ENCODE measurements at regions of chr4 and their contacts with region 1.

Region 1: DNA sequence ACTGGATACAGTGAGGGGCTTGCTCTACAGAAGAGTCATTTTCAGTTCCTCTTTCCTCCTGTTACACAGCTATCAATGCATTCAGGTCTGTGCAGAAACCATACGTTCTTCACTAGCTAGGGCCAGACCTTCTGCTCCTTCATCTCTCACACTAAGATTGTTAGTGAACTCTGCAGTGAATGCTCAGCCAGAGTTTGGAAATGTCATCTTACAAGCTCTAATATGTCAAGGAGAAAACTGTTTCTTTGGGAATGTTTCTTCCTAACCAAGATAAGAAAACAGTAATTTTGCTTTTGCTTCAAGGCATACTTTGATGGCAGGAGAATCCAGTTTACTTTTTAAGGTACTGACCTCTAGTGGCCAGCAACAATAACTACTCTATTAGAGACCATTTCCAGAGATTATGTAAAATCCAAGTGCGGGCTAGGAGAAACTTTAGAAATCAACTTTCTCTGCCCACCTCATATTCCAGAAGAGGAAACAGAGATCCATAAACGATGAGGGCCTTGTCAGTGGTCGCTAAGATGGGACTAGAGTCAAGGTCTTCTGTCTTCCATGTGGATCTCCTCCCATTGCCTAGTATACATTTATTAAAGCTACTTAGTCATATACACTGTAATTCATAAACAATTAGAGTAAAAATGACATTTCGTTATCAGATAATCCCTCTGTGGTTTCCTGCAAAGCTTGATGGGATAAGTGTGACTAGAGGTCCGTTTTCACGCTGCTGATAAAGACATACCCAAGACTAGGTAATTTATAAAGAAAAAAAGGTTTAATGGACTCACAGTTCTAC is 12.1 kb upstream of the CC2D2A start:
- DNase-seq: no peak
- ATAC-seq: peak; percentile 69
- H3K4me3 Mint-ChIP-seq: no peak overlapping the region
- H3K27ac Mint-ChIP-seq: no peak overlapping the region
- H3K4me1 Mint-ChIP-seq: peaks cover 3% of the 10 kb centered on the region
- H3K27me3 Mint-ChIP-seq: no peaks in the 10 kb centered on the region

Region 2: DNA sequence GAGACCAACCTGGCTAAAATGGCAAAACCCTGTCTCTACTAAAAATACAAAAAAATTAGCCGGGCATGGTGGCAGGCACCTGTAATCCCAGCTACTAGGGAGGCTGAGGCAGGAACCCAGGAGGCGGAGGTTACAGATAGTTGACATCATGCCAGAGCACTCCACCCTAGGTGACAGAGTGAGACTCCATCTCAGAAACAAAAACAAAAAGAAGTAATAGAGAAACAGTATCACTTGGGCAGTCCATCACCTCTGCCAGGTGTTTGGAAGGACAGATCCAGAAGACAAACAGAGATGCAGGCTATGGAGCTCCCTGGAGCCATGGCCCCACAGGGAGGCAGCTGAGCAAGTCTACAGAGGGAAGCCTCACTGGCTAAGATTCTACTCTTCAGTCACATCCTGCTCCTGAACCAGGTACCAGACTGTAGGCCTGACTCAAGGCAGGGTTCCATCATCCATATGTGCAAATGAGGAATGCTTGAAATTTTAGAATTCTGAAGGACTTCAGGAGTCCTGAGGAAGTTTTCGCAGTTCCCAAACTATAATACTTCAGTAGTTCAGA is 536.8 kb before region 1 on chr4:
- CTCF ChIA-PET with region 1: no interaction called
- POLR2A ChIA-PET with region 1: no interaction called
- intact Hi-C with region 1: loop called in 1 of 2 experiments (anchors 10 kb)
- DNase-seq: peak; percentile 55
- ATAC-seq: peak; percentile 76
- H3K4me3 Mint-ChIP-seq: no peak overlapping the region
- H3K27ac Mint-ChIP-seq: no peak overlapping the region
- H3K4me1 Mint-ChIP-seq: no peaks in the 10 kb centered on the region
- H3K27me3 Mint-ChIP-seq: peaks cover 6% of the 10 kb centered on the region

Region 3: DNA sequence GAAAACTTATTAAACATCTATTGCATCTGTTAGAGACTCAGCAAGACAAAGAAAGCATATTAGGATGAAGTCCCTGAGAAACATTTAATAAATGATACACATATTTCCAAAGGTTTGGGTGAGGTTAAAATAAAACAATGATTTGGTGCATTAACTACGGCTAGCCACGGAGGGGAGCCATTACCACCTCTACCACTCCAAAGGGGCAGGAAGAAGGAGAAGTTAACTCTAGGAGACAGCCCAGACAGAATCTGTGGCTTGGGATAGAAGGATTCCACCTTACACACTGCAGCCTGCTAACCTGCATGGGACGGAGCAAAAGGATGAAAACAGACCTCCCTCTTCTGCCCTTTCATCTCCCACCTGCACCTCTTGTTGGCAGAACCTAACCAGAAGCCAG is 218.9 kb before region 1 on chr4:
- CTCF ChIA-PET with region 1: interaction called, 27 read pairs
- POLR2A ChIA-PET with region 1: interaction called, 12 read pairs
- intact Hi-C with region 1: loop called (anchors 1 kb)
- DNase-seq: peak; percentile 58
- ATAC-seq: peak; percentile 55
- H3K4me3 Mint-ChIP-seq: no peak overlapping the region
- H3K27ac Mint-ChIP-seq: no peak overlapping the region
- H3K4me1 Mint-ChIP-seq: peaks cover 11% of the 10 kb centered on the region
- H3K27me3 Mint-ChIP-seq: no peaks in the 10 kb centered on the region

Region 4: GRCh38 chr4:15444872-15445547 is 12.6 kb before region 1 on chr4:
- CTCF ChIA-PET with region 1: interaction called, 32 read pairs
- POLR2A ChIA-PET with region 1: no interaction called
- intact Hi-C with region 1: no loop called
- DNase-seq: no peak
- ATAC-seq: no peak
- H3K4me3 Mint-ChIP-seq: no peak overlapping the region
- H3K27ac Mint-ChIP-seq: no peak overlapping the region
- H3K4me1 Mint-ChIP-seq: peaks cover 11% of the 10 kb centered on the region
- H3K27me3 Mint-ChIP-seq: no peaks in the 10 kb centered on the region

Region 5: GRCh38 chr4:15479089-15479912 is 21.7 kb after region 1 on chr4:
- CTCF ChIA-PET with region 1: interaction called, 11 read pairs
- POLR2A ChIA-PET with region 1: no interaction called
- intact Hi-C with region 1: no loop called
- DNase-seq: peak; percentile 15
- ATAC-seq: peak; percentile 39
- H3K4me3 Mint-ChIP-seq: no peak overlapping the region
- H3K27ac Mint-ChIP-seq: no peak overlapping the region
- H3K4me1 Mint-ChIP-seq: no peaks in the 10 kb centered on the region
- H3K27me3 Mint-ChIP-seq: no peaks in the 10 kb centered on the region

Region 6: DNA sequence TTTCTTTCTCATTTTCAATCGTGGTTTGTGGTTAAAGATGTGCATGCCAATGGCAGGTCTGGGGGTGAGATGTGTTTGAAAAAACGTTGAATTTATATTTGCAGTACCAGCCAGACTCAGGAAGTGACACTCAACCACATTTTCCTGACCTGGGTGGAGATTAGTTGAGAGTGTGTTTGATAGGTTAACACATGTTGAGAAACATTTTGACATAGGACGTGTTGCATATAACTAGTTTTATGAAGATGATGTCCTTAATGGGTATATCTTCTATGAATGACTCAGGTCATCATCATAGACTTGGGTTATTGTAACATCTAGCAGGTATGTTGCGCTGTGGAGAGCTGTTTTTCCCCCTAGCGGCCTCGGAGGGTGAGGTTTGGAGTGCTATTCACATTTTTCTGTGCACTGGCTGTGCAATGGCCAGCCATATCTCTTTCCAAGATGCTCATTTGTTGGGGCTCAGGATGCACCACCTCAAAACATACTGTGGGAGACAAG is 298.8 kb after region 1 on chr4:
- CTCF ChIA-PET with region 1: no interaction called
- POLR2A ChIA-PET with region 1: no interaction called
- intact Hi-C with region 1: no loop called
- DNase-seq: peak; percentile 87
- ATAC-seq: peak; percentile 82
- H3K4me3 Mint-ChIP-seq: peak overlapping the region; percentile 60
- H3K27ac Mint-ChIP-seq: peak overlapping the region; percentile 96
- H3K4me1 Mint-ChIP-seq: peaks cover 45% of the 10 kb centered on the region
- H3K27me3 Mint-ChIP-seq: no peaks in the 10 kb centered on the region